H1 (cell line): ENCODE measurements at regions of chr16 and their contacts with region 1.

Region 1: DNA sequence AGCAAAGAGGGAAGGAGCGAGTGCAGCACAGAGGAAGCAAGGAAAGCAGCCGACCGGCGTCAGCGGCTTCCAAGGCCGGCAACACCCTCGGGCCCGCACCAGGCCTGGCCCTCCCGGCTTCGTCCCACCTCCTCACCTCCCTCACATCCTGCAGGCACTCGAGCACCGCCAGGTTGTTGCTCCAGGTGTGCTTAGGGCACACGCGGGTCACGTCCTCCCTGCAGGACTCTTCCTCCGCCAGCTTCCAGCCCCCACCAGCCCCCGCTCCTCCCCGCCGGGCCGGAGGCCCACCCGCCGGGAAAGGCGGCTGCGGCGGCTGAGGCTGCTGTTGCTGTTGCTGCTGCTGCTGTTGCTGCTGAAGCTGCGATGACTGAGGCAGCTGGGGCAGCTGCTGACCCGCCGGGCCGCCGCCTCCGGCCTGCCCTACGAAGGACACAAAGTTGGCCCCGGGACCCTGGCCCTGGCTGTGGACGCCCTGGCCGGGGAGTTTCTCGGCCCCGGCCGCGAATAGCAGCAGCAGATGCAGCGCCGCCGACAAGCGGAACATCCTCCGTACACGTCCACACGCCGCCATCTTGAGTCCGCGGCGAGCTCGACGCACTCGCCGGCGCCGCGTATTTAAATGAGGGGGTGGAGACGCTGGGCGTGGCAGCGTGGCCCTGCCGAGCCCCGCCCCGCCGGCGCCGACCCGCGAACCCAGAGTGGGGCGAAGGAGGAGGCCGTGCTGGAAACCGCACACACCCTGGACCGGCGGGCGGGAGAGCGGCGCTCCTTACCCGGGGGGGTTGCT is at the start of gene GLG1:
- DNase-seq: peak; percentile 74 to 88
- H3K4me3 ChIP-seq: peak within 1 kb of the TSS; percentile 71 to 92 (median 89)
- H3K27ac ChIP-seq: peak within 1 kb of the TSS; percentile 85
- H3K4me1 ChIP-seq: peaks cover 2 to 7% (median 6%) of the 10 kb centered on the region in 4 experiments; a peak in 5 of 7 replicates
- H3K27me3 ChIP-seq: no peaks in the 10 kb centered on the region
- CTCF ChIP-seq: no peak
- EP300 ChIP-seq: no peak
- POLR2A ChIP-seq: peak; percentile 89 to 92
- RAD21 ChIP-seq: peak in 1 of 2 experiments; percentile 6; a peak in 1 of 4 replicates
- total RNA-seq, gene GLG1: 137 and 139 TPM in 2 replicates

Region 2: DNA sequence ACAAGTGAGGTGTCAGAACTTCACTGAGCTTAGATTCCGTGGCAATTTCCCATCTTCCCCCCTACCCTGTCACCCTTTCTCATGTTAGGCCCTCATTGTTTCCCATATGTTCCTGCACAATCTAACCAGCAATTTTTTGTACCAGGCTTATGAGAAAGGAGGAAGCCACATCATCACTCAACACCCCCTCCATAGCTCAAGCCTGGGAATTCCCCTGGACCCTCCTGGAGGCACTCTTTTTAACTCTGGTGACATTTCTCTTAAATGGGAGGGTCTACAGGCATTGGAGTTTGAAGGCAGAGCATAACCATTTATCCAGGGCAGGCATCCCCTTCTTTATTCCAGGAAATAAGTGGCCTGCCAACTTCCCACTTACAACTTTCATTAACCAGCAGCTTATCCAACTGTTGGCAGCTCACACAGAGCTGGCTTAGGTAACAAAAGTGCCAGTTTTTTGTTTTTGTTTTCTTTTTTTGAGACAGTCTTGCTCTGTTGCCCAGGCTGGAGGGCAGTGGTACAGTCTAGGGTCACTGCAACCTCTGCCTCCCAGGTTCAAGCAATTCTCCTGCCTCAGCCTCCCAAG is 10.6 kb after region 1 on chr16:
- CTCF ChIA-PET with region 1: interaction called, 8 read pairs
- POLR2A ChIA-PET with region 1: interaction called, 27 read pairs
- DNase-seq: no peak
- H3K4me3 ChIP-seq: no peak overlapping the region
- H3K27ac ChIP-seq: no peak overlapping the region
- H3K4me1 ChIP-seq: peaks cover 0 to 4% (median under 1%) of the 10 kb centered on the region in 4 experiments; a peak in 2 of 7 replicates
- H3K27me3 ChIP-seq: no peaks in the 10 kb centered on the region
- CTCF ChIP-seq: no peak
- EP300 ChIP-seq: no peak
- POLR2A ChIP-seq: no peak
- RAD21 ChIP-seq: no peak

Region 3: DNA sequence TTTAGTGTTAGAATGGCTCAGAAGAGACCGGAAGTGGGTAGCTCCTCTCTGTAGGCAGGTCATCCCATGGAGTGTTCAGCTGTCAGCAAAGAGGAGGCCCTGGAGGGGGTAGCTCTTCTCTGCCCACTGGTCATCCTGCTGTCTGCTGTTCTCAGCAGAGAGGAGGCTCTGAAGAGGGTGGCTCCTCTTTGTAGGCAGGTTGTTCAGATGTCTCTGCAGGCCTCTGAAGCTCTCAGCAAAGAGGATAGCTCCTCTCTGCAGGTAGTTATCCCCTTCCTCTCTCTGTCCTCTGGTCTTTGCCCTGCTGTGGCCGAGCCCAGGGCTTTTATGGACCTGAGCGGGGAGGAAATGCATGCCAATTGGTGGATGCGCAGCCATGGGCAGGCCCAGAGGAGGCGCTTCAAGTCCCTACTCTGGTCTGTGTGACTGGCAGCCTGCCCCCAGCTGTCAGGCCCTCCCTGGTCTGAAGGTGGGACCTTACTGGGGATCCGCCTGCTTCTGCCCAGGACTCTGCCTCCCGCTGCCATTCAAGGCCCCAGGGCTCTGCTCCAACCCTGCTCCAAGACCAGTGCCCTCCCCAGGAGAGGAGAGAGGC is 200.4 kb after region 1 on chr16:
- CTCF ChIA-PET with region 1: no interaction called
- POLR2A ChIA-PET with region 1: no interaction called
- DNase-seq: no peak
- H3K4me3 ChIP-seq: no peak overlapping the region
- H3K27ac ChIP-seq: no peak overlapping the region
- H3K4me1 ChIP-seq: peaks cover 0 to 9% (median 2%) of the 10 kb centered on the region in 4 experiments; a peak in 5 of 7 replicates
- H3K27me3 ChIP-seq: peaks cover 4 to 8% (median 7%) of the 10 kb centered on the region in 4 experiments; a peak in 6 of 7 replicates
- CTCF ChIP-seq: no peak
- EP300 ChIP-seq: no peak
- POLR2A ChIP-seq: no peak
- RAD21 ChIP-seq: no peak